Thyroid gland (tissue), 4 donors: ENCODE measurements at regions of chr19 and their contacts with region 1.

Region 1: DNA sequence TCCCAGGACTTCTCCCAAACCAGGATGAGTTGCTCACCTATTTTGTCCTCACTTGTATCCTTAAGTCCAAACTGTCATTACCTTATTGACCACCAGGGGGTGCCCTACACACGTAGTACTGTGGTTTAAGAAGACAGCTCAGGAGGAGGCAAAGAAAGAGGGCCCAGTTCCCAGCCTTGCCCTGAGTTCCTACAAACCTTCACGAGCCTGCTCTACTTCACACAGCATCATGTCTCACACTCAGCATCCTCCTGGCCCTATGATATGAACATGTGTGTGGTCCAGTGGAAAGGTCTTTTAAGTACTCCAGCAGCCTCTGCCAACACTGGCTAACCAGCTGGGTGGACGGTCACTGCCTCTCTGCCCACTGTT is 8.1 kb upstream of the ZNF784 start:
- DNase-seq: peak; percentile 89 to 91
- H3K4me3 ChIP-seq: no peak overlapping the region
- H3K27ac ChIP-seq: no peak overlapping the region
- H3K4me1 ChIP-seq: peaks cover 15 to 19% of the 10 kb centered on the region in 2 donors
- H3K27me3 ChIP-seq: no peaks in the 10 kb centered on the region
- CTCF ChIP-seq: peak; percentile 43 to 92 (median 85)
- POLR2A ChIP-seq: no peak

Region 2: DNA sequence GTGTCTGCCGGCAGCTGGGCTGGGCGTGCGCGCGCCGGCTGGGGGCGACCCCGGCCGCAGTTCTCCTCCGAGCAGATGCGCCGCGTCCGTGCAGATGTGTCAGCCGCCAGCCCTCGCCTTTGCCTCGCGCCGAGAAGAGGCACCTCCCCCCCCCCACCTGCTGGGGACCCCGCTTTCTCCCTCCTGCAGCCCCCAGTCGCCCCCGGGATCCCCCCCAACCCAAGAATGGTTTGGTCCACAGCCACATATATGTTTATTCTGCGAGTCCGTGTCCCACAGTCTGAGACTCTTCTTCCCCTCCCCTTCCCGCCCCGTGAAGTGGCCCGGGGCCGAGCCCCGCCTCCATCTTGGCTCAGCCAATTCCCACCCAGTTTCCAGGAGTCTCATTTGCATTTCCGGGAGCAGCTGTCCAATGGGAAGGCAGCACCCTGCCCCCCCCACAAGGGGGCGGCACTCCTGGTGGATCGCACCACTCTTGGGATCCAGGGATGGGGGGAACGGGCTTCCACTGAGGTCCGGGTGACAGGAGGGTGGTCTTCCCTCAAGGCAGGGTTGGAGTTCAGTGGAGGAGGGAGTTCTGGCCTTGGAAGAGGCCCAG is 179.6 kb before region 1 on chr19:
- intact Hi-C with region 1: no loop called
- DNase-seq: peak; percentile 66 to 70
- H3K4me3 ChIP-seq: no peak overlapping the region
- H3K27ac ChIP-seq: no peak overlapping the region
- H3K4me1 ChIP-seq: peaks cover 0 to 22% of the 10 kb centered on the region in 2 donors
- H3K27me3 ChIP-seq: peaks cover 9% of the 10 kb centered on the region
- CTCF ChIP-seq: no peak
- POLR2A ChIP-seq: no peak

Region 3: DNA sequence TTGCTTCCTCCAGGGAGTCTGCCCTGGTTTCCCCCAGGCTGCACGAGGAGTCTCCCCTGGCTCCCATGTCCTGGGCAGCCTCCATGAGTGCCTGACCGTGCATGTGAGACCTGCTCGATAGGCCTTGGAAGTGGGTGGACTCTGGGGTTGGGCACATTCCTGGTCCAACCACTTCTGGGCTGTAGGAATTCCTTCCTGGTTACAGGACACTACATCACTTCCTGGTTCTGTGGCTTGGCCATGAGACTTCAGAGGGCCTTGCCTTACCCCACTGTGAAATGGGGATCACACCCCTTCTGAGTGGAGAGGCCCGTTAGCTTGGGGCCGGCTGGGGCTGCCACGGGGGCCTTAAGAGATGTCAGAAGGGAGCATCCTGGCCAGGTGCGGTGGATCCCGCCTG is 160.0 kb before region 1 on chr19:
- intact Hi-C with region 1: loop called (anchors 5 kb)
- DNase-seq: no peak
- H3K4me3 ChIP-seq: no peak overlapping the region
- H3K27ac ChIP-seq: no peak overlapping the region
- H3K4me1 ChIP-seq: peaks cover 19 to 36% of the 10 kb centered on the region in 2 donors
- H3K27me3 ChIP-seq: no peaks in the 10 kb centered on the region
- CTCF ChIP-seq: no peak
- POLR2A ChIP-seq: no peak

Region 4: DNA sequence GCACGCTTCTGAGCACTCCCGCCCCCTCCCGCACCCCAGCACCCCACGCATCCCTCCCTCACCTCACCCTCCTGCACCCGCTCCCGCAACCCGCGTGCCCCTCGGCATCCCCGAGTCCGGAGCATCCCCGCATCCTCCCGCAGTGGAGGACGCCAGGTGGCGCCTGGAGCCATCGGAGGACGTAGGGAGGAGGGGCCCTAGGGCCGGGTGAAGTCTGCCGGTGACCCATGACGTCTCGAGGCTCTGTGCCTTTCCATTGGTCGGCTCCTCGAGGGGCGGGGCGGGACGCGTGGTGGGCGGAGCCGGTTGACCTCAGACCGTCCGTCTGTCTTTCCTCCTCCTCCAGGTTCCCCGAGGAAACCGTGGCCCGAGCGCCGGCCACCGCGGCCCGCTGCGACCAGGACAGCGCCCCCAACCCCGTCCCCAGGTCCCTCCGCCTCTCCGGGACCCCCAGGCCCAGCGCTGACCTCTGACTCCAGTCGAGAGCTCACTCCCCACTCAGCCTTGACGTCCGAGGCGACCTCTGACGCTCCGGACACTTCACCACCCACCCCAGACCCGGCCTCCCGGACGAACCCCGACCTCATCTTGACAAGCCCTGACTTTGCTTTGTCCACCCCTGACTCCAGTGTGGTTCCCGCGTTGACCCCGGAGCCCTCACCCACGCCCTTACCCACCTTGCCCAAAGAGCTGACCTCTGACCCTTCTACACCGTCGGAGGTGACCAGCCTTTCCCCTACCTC is 115.4 kb before region 1 on chr19:
- intact Hi-C with region 1: loop called (anchors 5 kb)
- DNase-seq: peak; percentile 90 to 93
- H3K4me3 ChIP-seq: peak overlapping the region in 2 of 3 donors; percentile 41 to 56
- H3K27ac ChIP-seq: peak overlapping the region; percentile 67 to 87 (median 79)
- H3K4me1 ChIP-seq: peaks cover 0 to 4% of the 10 kb centered on the region in 2 donors
- H3K27me3 ChIP-seq: no peaks in the 10 kb centered on the region
- CTCF ChIP-seq: peak; percentile 53 to 98 (median 92)
- POLR2A ChIP-seq: peak in 1 of 2 donors; percentile 50